Psoas muscle (tissue), 8 donors: ENCODE measurements at regions of chr5 and their contacts with region 1.

Region 1: GRCh38 chr5:149731639-149732323 is 1.7 kb downstream of the PPARGC1B start:
- DNase-seq: peak; percentile 87 to 93
- ATAC-seq: peak; percentile 61 to 67 (median 66)
- H3K4me3 ChIP-seq: peak overlapping the region; percentile 95
- H3K27ac ChIP-seq: peak overlapping the region; percentile 98
- H3K4me1 ChIP-seq: peaks cover 14% of the 10 kb centered on the region
- H3K27me3 ChIP-seq: no peaks in the 10 kb centered on the region
- CTCF ChIP-seq: peak; percentile 6

Region 2: DNA sequence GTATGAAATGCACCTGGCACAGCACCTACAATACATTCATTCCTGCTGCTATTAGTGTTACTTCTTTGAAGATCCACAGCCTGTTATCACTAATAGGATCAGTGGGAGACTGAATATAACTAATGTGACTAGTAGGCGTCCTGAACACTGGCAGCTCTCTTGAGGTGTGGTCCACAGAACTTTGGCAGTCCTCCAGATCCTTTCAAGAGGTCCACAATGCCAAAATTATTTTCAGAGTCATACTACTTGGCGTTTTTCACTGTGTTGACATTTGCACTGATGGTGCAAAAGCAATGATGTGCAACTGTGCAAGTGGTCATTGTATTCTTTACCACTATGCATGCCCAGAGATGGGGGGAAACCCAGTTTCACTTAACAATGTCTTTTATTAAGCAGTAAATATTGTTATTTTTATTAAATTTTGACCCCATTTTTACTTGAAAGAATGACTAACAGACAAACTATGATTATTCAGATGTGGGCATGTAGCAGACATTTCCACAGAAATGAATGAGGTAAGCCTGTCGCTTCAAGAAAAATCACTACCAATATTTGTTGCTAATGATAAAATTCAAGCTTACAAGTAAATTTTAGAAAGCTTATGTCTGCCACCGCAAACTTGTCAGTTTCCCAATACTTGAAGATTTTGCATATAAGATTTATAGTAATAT is 856.4 kb before region 1 on chr5:
- intact Hi-C with region 1: no loop called
- DNase-seq: no peak
- ATAC-seq: peak in 2 of 4 donors; percentile 25 to 35
- H3K4me3 ChIP-seq: no peak overlapping the region
- H3K27ac ChIP-seq: no peak overlapping the region
- H3K4me1 ChIP-seq: peaks cover 15% of the 10 kb centered on the region
- H3K27me3 ChIP-seq: no peaks in the 10 kb centered on the region
- CTCF ChIP-seq: no peak

Region 3: GRCh38 chr5:149641000-149641576 is 90.7 kb before region 1 on chr5:
- intact Hi-C with region 1: no loop called
- DNase-seq: peak; percentile 37 to 70
- ATAC-seq: peak; percentile 77 to 91 (median 84)
- H3K4me3 ChIP-seq: peak overlapping the region; percentile 62
- H3K27ac ChIP-seq: peak overlapping the region; percentile 67
- H3K4me1 ChIP-seq: peaks cover 20% of the 10 kb centered on the region
- H3K27me3 ChIP-seq: no peaks in the 10 kb centered on the region
- CTCF ChIP-seq: no peak

Region 4: GRCh38 chr5:149667084-149667828 is 64.5 kb before region 1 on chr5:
- intact Hi-C with region 1: loop called in 1 of 2 experiments (anchors 5 kb)
- DNase-seq: no peak
- ATAC-seq: peak; percentile 54 to 72 (median 67)
- H3K4me3 ChIP-seq: no peak overlapping the region
- H3K27ac ChIP-seq: no peak overlapping the region
- H3K4me1 ChIP-seq: peaks cover 32% of the 10 kb centered on the region
- H3K27me3 ChIP-seq: no peaks in the 10 kb centered on the region
- CTCF ChIP-seq: peak; percentile 83

Region 5: DNA sequence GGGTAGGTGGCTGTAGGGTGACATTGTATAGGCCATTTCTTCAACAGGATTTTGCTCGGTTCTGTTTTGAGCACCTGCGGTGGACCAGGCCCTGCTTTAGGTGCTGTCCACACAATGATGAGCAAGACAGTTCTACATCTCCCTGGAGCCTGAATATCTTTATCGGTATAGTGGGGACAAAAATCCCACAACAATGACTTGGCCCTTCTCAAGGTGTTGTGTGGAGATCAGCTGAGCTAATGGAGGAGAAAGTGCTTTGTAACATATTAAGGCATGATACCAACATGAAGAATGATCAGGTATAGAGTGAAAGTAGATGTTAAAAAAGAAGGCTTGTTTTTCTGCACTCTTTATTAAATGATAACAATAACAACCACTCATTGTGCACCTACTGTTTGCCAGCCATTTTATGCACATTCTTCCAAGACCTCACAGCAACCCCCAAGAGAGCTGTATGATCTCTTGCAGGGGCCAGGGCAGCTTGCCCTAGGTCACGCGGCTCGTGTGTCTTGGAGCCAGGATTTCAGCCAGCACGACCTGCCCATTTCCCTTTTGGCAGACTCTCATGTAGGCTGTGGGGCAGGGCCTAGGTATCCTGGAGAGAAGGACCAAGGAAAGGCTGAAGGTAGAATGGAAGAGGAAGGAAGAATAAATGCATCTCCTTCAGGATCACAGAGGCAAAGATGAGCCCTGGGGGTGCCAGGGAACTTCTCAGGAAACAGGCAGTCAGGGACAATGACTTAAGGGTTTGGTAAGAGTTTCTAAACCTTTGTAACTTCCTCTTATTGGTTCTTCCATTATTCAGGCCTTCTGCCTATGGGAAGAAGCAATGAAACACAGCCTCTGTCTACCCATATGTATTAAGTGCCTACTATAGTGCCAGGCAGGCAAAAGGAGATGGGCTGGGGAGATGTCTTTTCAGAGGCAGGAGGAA is 51.6 kb before region 1 on chr5:
- intact Hi-C with region 1: loop called in 1 of 2 experiments (anchors 5 kb)
- DNase-seq: peak in 1 of 2 donors; percentile 65
- ATAC-seq: peak; percentile 48 to 80 (median 68)
- H3K4me3 ChIP-seq: no peak overlapping the region
- H3K27ac ChIP-seq: peak overlapping the region; percentile 30
- H3K4me1 ChIP-seq: peaks cover 21% of the 10 kb centered on the region
- H3K27me3 ChIP-seq: no peaks in the 10 kb centered on the region
- CTCF ChIP-seq: no peak

Region 6: DNA sequence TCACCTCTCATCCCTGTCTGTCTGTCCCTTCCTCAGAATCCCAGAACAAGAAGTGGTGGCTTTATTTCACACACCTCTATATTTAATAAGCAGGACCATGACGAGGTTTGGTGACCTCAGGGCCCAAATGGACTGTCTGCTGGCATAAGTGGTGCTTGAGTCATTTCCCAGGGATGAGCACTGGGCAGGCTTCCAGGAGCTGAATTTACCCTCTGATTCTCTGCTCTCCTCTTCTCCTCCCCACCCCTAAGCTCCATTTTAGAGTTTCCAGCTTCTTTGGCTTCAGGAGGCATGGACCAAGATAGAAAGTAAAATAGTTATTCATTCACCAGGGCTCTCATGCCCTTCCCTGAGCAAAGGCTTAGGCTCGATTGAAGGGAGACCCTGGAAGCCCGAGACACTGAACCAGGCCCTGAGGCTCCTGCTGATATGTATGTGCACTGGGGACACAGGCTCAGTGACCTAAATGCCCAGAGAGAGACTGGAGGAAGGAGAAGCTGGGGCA is 67.4 kb after region 1 on chr5:
- intact Hi-C with region 1: loop called in 1 of 2 experiments (anchors 2 kb)
- DNase-seq: peak; percentile 79 to 90
- ATAC-seq: peak; percentile 83 to 87 (median 83)
- H3K4me3 ChIP-seq: peak overlapping the region; percentile 41
- H3K27ac ChIP-seq: peak overlapping the region; percentile 99
- H3K4me1 ChIP-seq: peaks cover 98% of the 10 kb centered on the region
- H3K27me3 ChIP-seq: no peaks in the 10 kb centered on the region
- CTCF ChIP-seq: no peak

Region 7: DNA sequence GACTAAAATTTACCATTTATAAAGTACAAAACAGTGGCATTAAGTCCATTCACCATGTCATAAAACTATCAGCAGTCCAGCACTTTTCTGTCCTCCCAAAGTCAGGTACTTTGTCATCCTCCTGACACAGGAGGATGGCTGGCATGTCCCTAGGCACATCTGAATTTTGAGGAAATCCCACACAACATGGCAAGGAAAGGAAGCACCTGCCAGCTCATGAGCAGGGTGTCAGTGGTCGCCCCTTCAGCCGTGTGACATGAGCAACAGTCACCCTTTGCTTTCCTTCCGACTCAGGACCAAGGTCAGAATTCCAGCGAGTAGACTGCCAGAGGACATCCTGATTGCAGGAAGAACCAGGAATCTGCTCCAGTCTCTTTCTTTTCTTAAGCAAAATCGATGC is 75.4 kb after region 1 on chr5:
- intact Hi-C with region 1: loop called in 1 of 2 experiments (anchors 2 kb)
- DNase-seq: no peak
- ATAC-seq: no peak
- H3K4me3 ChIP-seq: no peak overlapping the region
- H3K27ac ChIP-seq: peak overlapping the region; percentile 99
- H3K4me1 ChIP-seq: peaks cover 89% of the 10 kb centered on the region
- H3K27me3 ChIP-seq: no peaks in the 10 kb centered on the region
- CTCF ChIP-seq: no peak

Region 8: GRCh38 chr5:149828161-149828884 is 96.5 kb after region 1 on chr5:
- intact Hi-C with region 1: loop called (anchors 1 to 2 kb)
- DNase-seq: peak; percentile 88 to 93
- ATAC-seq: peak; percentile 84 to 90 (median 88)
- H3K4me3 ChIP-seq: no peak overlapping the region
- H3K27ac ChIP-seq: peak overlapping the region; percentile 80
- H3K4me1 ChIP-seq: peaks cover 60% of the 10 kb centered on the region
- H3K27me3 ChIP-seq: no peaks in the 10 kb centered on the region
- CTCF ChIP-seq: peak; percentile 93